ENCODE measurements at regions of chr22 and their contacts with region 1.

Region 1: GRCh38 chr22:39236321-39237317 is 8.2 kb downstream of the PDGFB start:
- DNase-seq: peak; percentile 74
- ATAC-seq: peak; percentile 66

Region 2: GRCh38 chr22:39170825-39171622 is 65.6 kb before region 1 on chr22:
- intact Hi-C with region 1: loop called (anchors 10 kb)
- DNase-seq: peak; percentile 90
- ATAC-seq: peak; percentile 84

Region 3: GRCh38 chr22:39292561-39293098 is 56.0 kb after region 1 on chr22:
- intact Hi-C with region 1: loop called (anchors 10 kb)
- DNase-seq: peak; percentile 93
- ATAC-seq: peak; percentile 85